AG04450 (cell line): ENCODE measurements at regions of chr12 and their contacts with region 1.

Region 1: GRCh38 chr12:9750276-9751203 is 10.2 kb downstream of the CD69 start:
- DNase-seq: peak; percentile 13
- H3K4me3 ChIP-seq: no peak overlapping the region
- H3K27ac ChIP-seq: no peak overlapping the region
- H3K27me3 ChIP-seq: no peaks in the 10 kb centered on the region
- CTCF ChIP-seq: peak; percentile 83

Region 2: DNA sequence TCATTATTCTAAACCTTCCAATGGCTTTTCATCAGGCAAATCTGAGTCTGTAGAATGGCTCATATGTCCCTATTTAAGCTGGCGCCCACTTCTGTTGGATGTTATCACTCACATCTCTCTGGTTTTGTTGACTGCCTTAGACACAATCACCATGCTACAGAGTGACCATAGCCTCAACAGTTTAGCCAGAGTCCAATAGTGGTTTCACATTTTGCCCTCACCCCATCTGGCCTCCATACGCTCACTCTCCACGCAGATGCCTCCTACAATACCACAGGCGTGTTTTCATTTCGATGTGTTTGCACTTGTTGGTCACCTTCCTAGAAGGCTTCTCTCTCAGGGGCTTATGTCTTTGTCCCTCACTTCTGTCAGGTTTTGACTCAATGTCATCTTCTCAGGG is 146.3 kb before region 1 on chr12:
- CTCF ChIA-PET with region 1: no interaction called
- POLR2A ChIA-PET with region 1: no interaction called
- DNase-seq: no peak
- H3K4me3 ChIP-seq: no peak overlapping the region
- H3K27ac ChIP-seq: no peak overlapping the region
- H3K27me3 ChIP-seq: no peaks in the 10 kb centered on the region
- CTCF ChIP-seq: no peak

Region 3: DNA sequence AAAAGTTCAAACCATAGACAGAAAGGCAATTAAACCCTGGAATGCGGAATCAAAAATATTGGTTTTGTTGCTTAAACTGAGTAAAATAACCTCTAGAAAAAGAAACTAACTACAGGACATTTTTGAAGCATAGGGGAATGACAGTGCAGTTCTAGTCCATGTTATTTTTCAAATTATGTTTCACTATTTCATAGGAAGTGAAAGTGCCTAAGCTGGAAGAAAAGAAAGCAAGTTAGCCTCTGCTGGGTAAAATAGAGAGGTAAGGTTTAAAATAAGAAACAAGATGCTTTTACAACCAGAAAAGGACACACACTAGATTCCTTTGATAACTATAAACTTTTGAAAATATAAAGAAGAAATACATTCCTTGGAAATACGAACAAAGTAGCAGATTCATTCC is 18.7 kb before region 1 on chr12:
- CTCF ChIA-PET with region 1: interaction called, 25 read pairs
- POLR2A ChIA-PET with region 1: no interaction called
- DNase-seq: no peak
- H3K4me3 ChIP-seq: no peak overlapping the region
- H3K27ac ChIP-seq: no peak overlapping the region
- H3K27me3 ChIP-seq: no peaks in the 10 kb centered on the region
- CTCF ChIP-seq: no peak

Region 4: DNA sequence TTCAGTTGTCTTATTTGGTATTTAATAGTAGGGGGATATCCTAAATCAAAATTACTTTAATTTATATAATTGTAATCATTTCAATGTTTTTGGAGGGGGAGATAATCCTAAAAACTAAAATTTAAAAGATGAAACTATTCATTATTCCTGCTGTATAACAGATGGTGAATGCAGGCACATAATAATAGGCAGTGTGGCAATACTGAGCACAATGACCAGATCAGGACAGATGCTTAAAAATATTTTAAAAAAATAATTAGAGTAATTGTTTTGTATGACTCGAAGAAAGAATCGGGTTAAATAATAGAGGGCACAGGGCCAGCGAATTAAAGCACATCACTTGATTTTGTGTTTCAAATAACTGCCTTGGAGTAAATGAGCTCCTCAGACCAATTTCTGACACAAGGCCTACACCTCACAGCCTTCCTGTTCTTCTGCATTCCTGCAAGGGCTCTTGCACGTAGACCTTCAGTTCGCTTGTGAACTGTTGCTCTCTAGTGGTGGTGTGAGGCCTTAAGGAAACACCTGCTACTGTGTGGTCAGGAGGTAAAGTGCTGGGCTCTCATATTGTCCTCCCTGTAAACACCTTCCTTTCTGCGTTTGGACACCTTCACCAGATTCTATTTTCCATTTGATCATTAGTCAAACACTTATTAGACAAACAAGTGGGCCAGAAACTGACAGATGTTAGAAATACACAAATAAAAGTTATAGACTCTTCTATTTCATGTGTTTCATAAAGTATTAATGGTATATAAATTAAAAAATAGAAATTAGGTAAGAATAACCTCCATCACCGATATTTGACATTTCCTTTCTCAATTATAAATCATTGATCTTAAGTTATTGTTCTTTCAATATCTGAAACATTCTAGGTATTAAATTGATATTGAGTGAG is 47.4 kb after region 1 on chr12:
- CTCF ChIA-PET with region 1: interaction called, 76 read pairs
- POLR2A ChIA-PET with region 1: no interaction called
- DNase-seq: no peak
- H3K4me3 ChIP-seq: no peak overlapping the region
- H3K27ac ChIP-seq: no peak overlapping the region
- H3K27me3 ChIP-seq: no peaks in the 10 kb centered on the region
- CTCF ChIP-seq: peak; percentile 29

Region 5: GRCh38 chr12:9869307-9870161 is 119.0 kb after region 1 on chr12 and contains the start of gene CLEC2B:
- CTCF ChIA-PET with region 1: interaction called, 20 read pairs
- POLR2A ChIA-PET with region 1: no interaction called
- DNase-seq: peak; percentile 56
- H3K4me3 ChIP-seq: peak within 1 kb of the TSS; percentile 54
- H3K27ac ChIP-seq: peak within 1 kb of the TSS; percentile 54
- H3K27me3 ChIP-seq: no peaks in the 10 kb centered on the region
- CTCF ChIP-seq: no peak
- polyA plus RNA-seq, gene CLEC2B: 1.4 and 2.1 TPM in 2 replicates

Region 6: GRCh38 chr12:9932270-9932669 is 181.7 kb after region 1 on chr12 and contains the start of gene CLEC2A:
- CTCF ChIA-PET with region 1: interaction called, 128 read pairs
- POLR2A ChIA-PET with region 1: no interaction called
- DNase-seq: no peak
- H3K4me3 ChIP-seq: no peak within 1 kb of the TSS
- H3K27ac ChIP-seq: no peak within 1 kb of the TSS
- H3K27me3 ChIP-seq: no peaks in the 10 kb centered on the region
- CTCF ChIP-seq: no peak
- polyA plus RNA-seq, gene CLEC2A: not detected in 2 replicates

Region 7: GRCh38 chr12:10012630-10013330 is 262.2 kb after region 1 on chr12:
- CTCF ChIA-PET with region 1: interaction called, 21 read pairs
- POLR2A ChIA-PET with region 1: no interaction called
- DNase-seq: no peak
- H3K4me3 ChIP-seq: no peak overlapping the region
- H3K27ac ChIP-seq: no peak overlapping the region
- H3K27me3 ChIP-seq: no peaks in the 10 kb centered on the region
- CTCF ChIP-seq: no peak